Stomach (tissue), 19 donors: ENCODE measurements at regions of chr12 and their contacts with region 1.

Region 1: DNA sequence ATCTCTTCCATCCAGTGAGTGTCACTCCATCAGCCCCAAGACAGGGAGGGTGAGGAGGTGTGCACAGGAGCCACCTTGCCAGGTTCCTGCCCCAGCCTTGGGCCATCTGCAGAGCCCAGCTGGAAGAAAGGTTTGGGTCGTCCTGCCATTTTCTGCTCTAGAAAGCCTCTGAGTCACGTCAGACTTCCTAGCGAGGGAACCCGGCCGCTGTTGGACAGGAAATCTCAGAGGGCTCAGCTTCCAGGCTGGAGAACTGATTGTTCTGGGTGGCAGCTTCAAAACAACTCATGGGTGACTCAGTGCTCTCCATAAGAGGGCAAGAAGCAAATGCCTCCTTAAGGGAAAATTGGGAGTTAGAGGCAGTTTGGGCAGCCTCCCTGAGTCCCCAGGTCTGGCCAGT is 16.6 kb downstream of the HIP1R start:
- DNase-seq: no peak
- H3K4me3 ChIP-seq: no peak overlapping the region
- H3K27ac ChIP-seq: peak overlapping the region; percentile 34 to 69 (median 47)
- H3K4me1 ChIP-seq: peaks cover 16 to 29% (median 22%) of the 10 kb centered on the region in 4 donors
- H3K27me3 ChIP-seq: no peaks in the 10 kb centered on the region
- CTCF ChIP-seq: no peak
- EP300 ChIP-seq: no peak
- POLR2A ChIP-seq: no peak

Region 2: GRCh38 chr12:122793685-122794106 is 58.1 kb before region 1 on chr12:
- intact Hi-C with region 1: loop called (anchors 10 kb)
- DNase-seq: peak in 1 of 2 donors; percentile 79
- H3K4me3 ChIP-seq: no peak overlapping the region
- H3K27ac ChIP-seq: no peak overlapping the region
- H3K4me1 ChIP-seq: peaks cover 0 to 18% (median 6%) of the 10 kb centered on the region in 4 donors
- H3K27me3 ChIP-seq: no peaks in the 10 kb centered on the region
- CTCF ChIP-seq: peak in 5 of 7 experiments; percentile 38 to 77 (median 71)
- EP300 ChIP-seq: no peak
- POLR2A ChIP-seq: no peak

Region 3: DNA sequence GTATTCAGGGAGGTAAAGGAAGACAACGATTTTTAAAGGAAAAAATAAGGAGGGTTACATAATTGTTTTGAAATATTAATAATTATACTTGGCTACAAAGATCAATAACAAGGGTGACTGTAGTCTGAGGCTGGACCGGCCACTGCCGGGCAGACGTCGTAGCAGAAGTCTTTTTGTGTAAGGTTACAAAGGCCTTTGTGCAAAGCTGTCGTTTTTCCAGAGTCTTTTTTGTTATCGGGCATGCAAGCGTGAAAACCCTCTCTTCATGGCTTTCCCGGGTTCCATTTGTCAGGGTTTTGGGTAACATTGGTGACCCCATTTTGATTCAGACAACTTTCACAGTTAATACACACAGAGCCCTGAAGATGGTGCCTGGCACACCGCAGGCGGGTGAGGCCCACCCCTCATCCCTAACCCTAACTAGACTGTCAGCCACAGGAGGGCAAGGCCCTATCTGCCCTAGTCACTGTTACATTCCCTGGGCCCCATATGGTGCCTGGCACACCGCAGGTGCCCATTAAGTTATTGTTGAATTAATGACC is 650.4 kb after region 1 on chr12:
- intact Hi-C with region 1: no loop called
- DNase-seq: no peak
- H3K4me3 ChIP-seq: no peak overlapping the region
- H3K27ac ChIP-seq: no peak overlapping the region
- H3K4me1 ChIP-seq: no peaks in the 10 kb centered on the region
- H3K27me3 ChIP-seq: no peaks in the 10 kb centered on the region
- CTCF ChIP-seq: no peak
- EP300 ChIP-seq: no peak
- POLR2A ChIP-seq: no peak